Activated naive CD8-positive, alpha-beta T cell treated with anti-CD3 and anti-CD28 coated beads, Interleukin-2, amount 10 ng/mL, durations not matched to agents 7 days and 5 days (primary cell): ENCODE measurements at regions of chrX and their contacts with region 1.

Region 1: GRCh38 chrX:136880452-136881013 is at the start of gene RBMX:
- DNase-seq: peak; percentile 82
- ATAC-seq: peak; percentile 92
- H3K4me3 Mint-ChIP-seq: peak within 1 kb of the TSS; percentile 96
- H3K27ac Mint-ChIP-seq: peak within 1 kb of the TSS; percentile 98
- H3K4me1 Mint-ChIP-seq: peaks cover 6% of the 10 kb centered on the region
- H3K27me3 Mint-ChIP-seq: no peaks in the 10 kb centered on the region
- total RNA-seq, gene RBMX: 252 to 260 TPM

Region 2: GRCh38 chrX:136767104-136767941 is 113.2 kb before region 1 on chrX:
- POLR2A ChIA-PET with region 1: interaction called, 25 read pairs
- DNase-seq: peak; percentile 64
- ATAC-seq: peak; percentile 74
- H3K4me3 Mint-ChIP-seq: peak overlapping the region; percentile 79
- H3K27ac Mint-ChIP-seq: peak overlapping the region; percentile 84
- H3K4me1 Mint-ChIP-seq: peaks cover 55% of the 10 kb centered on the region
- H3K27me3 Mint-ChIP-seq: no peaks in the 10 kb centered on the region

Region 3: DNA sequence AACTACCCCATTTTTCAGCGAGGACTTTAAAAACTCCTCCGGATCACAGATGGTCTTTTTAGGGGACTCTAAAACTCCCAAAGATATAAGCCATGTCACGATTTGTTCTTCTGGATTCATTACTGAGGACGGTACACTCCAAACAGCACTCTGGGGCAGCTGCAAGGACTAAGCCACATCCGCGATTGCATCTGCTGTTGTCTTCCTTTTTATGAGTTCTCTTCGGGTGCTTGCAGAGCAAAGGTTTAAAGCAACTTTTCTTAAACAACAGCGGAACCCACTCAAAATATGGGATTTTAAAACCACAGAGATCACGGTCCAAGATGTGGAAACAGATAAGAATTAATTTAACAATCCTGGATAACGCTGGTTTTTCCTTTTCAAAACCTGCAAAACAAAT is 99.8 kb before region 1 on chrX and contains the start of gene ARHGEF6:
- POLR2A ChIA-PET with region 1: interaction called, 24 read pairs
- DNase-seq: no peak
- ATAC-seq: peak; percentile 76
- H3K4me3 Mint-ChIP-seq: peak within 1 kb of the TSS; percentile 78
- H3K27ac Mint-ChIP-seq: peak within 1 kb of the TSS; percentile 94
- H3K4me1 Mint-ChIP-seq: peaks cover 45% of the 10 kb centered on the region
- H3K27me3 Mint-ChIP-seq: no peaks in the 10 kb centered on the region
- total RNA-seq, gene ARHGEF6: 85.0 to 87.1 TPM

Region 4: DNA sequence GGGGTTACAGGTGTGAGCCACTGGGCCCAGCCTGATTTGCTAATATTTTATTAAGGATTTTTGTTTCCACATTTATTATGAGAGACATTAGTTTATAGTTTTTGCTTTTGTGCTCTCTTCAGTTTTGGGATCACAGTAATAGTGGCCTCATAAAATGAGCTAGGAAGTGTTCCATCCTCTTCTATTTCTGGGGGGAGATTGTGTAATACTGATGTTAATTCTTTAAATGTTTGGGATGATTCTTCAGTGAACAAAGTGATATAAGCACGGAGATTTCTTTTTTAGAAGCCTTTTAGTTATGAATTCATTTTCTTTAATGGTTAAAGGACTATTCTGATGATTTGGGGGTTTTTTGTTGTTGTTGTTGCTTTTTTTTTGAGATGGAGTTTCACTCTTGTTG is 41.3 kb before region 1 on chrX:
- POLR2A ChIA-PET with region 1: no interaction called
- DNase-seq: no peak
- ATAC-seq: no peak
- H3K4me3 Mint-ChIP-seq: no peak overlapping the region
- H3K27ac Mint-ChIP-seq: no peak overlapping the region
- H3K4me1 Mint-ChIP-seq: peaks cover 2% of the 10 kb centered on the region
- H3K27me3 Mint-ChIP-seq: no peaks in the 10 kb centered on the region

Region 5: GRCh38 chrX:136870064-136870463 is 10.5 kb before region 1 on chrX:
- POLR2A ChIA-PET with region 1: interaction called, 25 read pairs
- DNase-seq: no peak
- ATAC-seq: no peak
- H3K4me3 Mint-ChIP-seq: no peak overlapping the region
- H3K27ac Mint-ChIP-seq: peak overlapping the region; percentile 76
- H3K4me1 Mint-ChIP-seq: peaks cover 20% of the 10 kb centered on the region
- H3K27me3 Mint-ChIP-seq: no peaks in the 10 kb centered on the region

Region 6: GRCh38 chrX:136909706-136910564 is 29.4 kb after region 1 on chrX:
- POLR2A ChIA-PET with region 1: interaction called, 20 read pairs
- DNase-seq: no peak
- ATAC-seq: peak; percentile 72
- H3K4me3 Mint-ChIP-seq: peak overlapping the region; percentile 100
- H3K27ac Mint-ChIP-seq: peak overlapping the region; percentile 94
- H3K4me1 Mint-ChIP-seq: peaks cover 8% of the 10 kb centered on the region
- H3K27me3 Mint-ChIP-seq: no peaks in the 10 kb centered on the region